Spleen (tissue), 13 donors: ENCODE measurements at regions of chr5 and their contacts with region 1.

Region 1: GRCh38 chr5:150217873-150218692 is 28.2 kb downstream of the SLC6A7 start:
- DNase-seq: peak; percentile 91
- H3K4me3 ChIP-seq: no peak overlapping the region
- H3K27ac ChIP-seq: no peak overlapping the region
- H3K4me1 ChIP-seq: peaks cover 0 to 8% (median 0%) of the 10 kb centered on the region in 6 donors
- H3K27me3 ChIP-seq: peaks cover 0 to 36% (median 0%) of the 10 kb centered on the region in 7 donors
- CTCF ChIP-seq: peak; percentile 82 to 96 (median 93)
- POLR2A ChIP-seq: no peak

Region 2: DNA sequence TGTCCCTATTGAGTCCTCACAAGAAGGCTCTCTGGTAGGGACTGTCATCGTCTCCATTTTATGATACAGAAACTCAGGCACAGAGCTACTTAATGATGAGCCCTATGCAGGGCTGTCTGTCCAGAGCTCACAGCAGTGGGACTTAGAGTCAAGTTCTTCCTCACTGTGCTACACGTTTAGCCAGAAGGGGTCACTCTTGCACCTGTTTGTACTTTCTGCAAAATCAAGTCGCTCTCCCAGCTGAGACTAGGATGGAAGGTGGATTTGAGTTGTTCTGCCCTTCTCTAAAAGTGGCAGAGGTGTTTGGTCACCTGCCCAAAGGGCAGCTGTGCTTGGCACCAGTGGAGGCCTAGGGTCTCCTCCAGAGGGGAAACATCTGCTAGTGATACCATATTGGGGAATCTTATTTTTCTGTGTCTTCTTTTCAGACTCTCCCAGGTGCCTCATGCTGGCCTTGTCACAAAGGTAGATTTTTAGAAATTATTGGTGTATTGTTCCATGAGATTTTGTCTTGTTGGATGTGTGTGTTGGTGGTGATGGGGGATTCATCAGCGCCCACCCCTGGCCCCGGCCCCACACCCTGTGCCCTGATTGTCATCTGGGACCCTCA is 383.7 kb before region 1 on chr5:
- intact Hi-C with region 1: loop called (anchors 5 kb)
- DNase-seq: no peak
- H3K4me3 ChIP-seq: no peak overlapping the region
- H3K27ac ChIP-seq: no peak overlapping the region
- H3K4me1 ChIP-seq: no peaks in the 10 kb centered on the region
- H3K27me3 ChIP-seq: no peaks in the 10 kb centered on the region
- CTCF ChIP-seq: peak in 10 of 11 experiments; percentile 39 to 73 (median 64)
- POLR2A ChIP-seq: no peak

Region 3: GRCh38 chr5:150129813-150130492 is 88.1 kb before region 1 on chr5:
- intact Hi-C with region 1: loop called (anchors 10 kb)
- DNase-seq: no peak
- H3K4me3 ChIP-seq: no peak overlapping the region
- H3K27ac ChIP-seq: peak overlapping the region in 3 of 8 donors; percentile 11 to 33 (median 13)
- H3K4me1 ChIP-seq: peaks cover 0 to 50% (median 19%) of the 10 kb centered on the region in 6 donors
- H3K27me3 ChIP-seq: peaks cover 0 to 7% (median 0%) of the 10 kb centered on the region in 7 donors
- CTCF ChIP-seq: peak; percentile 68 to 91 (median 85)
- POLR2A ChIP-seq: no peak

Region 4: DNA sequence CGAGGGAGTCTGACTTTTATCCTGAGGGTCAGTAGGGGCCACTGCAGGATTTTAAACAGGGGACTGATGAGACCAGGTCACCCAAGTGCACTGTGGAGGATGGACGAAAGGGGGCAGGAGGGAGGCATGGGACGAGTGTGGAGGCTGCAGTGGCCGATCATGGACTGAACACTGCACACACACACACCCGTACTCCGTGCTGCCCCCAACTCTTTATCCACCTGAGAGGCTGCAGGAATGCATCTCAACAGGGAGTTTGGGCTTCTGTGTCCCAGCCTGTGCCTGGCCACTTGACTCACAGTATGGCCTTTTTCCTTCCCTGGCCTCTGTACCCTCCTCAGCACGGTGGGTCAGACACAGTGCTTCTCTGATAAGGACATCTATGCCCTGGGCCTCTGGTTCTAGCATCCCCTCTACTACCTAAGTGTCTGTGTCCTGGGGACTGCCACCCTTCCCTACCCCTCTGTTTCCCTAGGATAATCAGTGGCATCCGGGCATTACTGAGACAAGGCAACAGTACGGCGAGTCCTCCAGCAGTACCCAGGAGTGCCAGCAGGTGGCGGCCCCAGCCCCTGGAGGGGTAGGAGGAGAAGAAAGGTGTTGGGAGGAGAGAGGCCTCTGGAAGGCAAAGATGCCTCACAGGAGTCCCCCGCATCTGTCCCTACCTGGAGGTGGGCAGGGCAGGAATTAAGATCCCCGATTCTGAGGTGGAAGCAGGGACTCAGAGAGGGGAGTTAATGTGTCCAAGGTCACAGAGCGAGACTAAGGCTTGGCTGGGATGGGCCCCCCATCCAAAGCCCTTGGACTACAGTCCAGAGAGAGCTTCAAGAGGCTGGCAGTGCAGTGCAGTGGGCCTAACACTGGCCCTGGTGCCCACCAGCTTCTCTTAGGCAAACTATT is 56.6 kb before region 1 on chr5:
- intact Hi-C with region 1: loop called (anchors 2 kb)
- DNase-seq: peak; percentile 92
- H3K4me3 ChIP-seq: no peak overlapping the region
- H3K27ac ChIP-seq: peak overlapping the region in 5 of 8 donors; percentile 9 to 83 (median 82)
- H3K4me1 ChIP-seq: peaks cover 2 to 65% (median 15%) of the 10 kb centered on the region in 6 donors
- H3K27me3 ChIP-seq: peaks cover 0 to 14% (median 4%) of the 10 kb centered on the region in 7 donors
- CTCF ChIP-seq: peak; percentile 84 to 94 (median 90)
- POLR2A ChIP-seq: no peak